ENCODE measurements at regions of chr19 and their contacts with region 1.

Region 1: DNA sequence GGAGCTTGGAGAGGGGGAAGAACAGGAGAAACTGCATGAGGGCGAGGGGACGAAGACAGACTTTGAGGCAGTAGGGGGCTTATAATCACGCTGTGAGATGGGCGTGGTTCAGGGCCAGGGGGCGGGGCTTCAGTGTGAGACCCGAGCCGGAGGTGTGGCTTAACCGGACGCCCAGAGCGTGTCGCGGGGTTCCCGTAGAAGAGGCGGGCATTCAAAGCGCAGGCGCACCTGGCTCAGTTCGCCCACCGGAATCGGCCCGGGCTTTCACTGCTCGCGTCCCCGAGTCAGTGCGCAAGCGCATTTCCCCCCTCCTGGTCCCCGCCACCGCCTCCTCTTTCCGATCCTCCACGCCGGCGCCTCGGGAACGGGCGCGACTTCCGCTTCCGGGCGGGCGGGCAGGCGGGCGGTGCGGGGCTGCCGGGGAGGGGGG is 225 bp upstream of the ZNF865 start:
- DNase-seq: peak; percentile 93 to 99 (median 98)
- ATAC-seq: peak; percentile 78
- H3K4me3 ChIP-seq: peak overlapping the region; percentile 64
- H3K4me3 Mint-ChIP-seq: peak overlapping the region; percentile 86
- H3K27ac ChIP-seq: peak overlapping the region; percentile 85 to 92
- H3K27ac Mint-ChIP-seq: peak overlapping the region; percentile 84
- H3K4me1 ChIP-seq: peaks cover 45% of the 10 kb centered on the region
- H3K4me1 Mint-ChIP-seq: peaks cover 54% of the 10 kb centered on the region
- H3K27me3 ChIP-seq: no peaks in the 10 kb centered on the region
- H3K27me3 Mint-ChIP-seq: no peaks in the 10 kb centered on the region
- CTCF ChIP-seq: no peak

Region 2: DNA sequence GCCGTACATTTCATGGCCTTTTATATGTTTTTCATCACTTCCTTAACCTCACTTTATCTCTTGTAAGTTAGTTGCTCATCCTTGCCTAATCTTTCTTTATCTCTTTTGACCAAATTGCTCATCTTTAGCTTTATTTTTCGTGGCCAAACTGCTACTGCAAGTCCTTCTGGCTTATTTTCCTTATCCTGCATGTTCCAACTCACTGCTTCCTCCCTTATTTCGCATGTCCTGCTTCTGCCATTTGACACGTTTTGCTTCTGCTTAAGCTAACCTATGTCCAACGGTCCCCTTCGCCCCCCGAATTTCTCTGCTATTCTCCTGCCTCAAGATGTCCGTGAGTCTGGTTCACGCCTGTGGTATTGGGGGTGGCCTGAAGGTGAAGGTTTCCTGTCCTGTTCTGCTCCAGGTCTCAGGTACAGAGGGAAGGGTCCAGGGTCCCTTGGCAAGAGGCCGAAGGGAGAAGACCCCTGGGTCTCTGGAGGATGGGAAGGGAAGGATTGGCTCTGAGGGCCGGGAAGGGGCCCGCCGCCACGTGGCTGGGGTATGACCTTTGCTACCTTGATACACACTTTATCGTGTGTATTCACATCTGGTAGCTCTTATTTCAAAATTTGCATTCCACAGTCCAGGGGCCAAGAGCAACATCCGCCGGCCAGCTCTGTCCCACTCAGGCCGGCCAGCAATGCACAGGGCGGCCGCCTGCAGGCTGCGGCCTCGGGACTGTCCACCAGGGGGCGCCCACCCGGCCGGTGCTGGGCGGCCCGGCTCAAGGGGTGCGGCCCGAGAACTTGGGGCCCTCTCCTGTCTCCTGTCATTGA is 137.8 kb before region 1 on chr19:
- CTCF ChIA-PET with region 1: no interaction called
- POLR2A ChIA-PET with region 1: no interaction called
- intact Hi-C with region 1: loop called in 1 of 2 experiments (anchors 5 kb)
- DNase-seq: peak; percentile 30 to 82 (median 58)
- ATAC-seq: peak; percentile 93
- H3K4me3 ChIP-seq: no peak overlapping the region
- H3K4me3 Mint-ChIP-seq: no peak overlapping the region
- H3K27ac ChIP-seq: no peak overlapping the region
- H3K27ac Mint-ChIP-seq: no peak overlapping the region
- H3K4me1 ChIP-seq: peaks cover 11% of the 10 kb centered on the region
- H3K4me1 Mint-ChIP-seq: no peaks in the 10 kb centered on the region
- H3K27me3 ChIP-seq: no peaks in the 10 kb centered on the region
- H3K27me3 Mint-ChIP-seq: no peaks in the 10 kb centered on the region
- CTCF ChIP-seq: peak; percentile 97

Region 3: GRCh38 chr19:55586976-55587668 is 18.1 kb before region 1 on chr19:
- CTCF ChIA-PET with region 1: interaction called, 12 read pairs
- POLR2A ChIA-PET with region 1: interaction called, 23 read pairs
- intact Hi-C with region 1: loop called in 1 of 2 experiments (anchors 2 kb)
- DNase-seq: peak; percentile 85 to 96 (median 91)
- ATAC-seq: peak; percentile 95
- H3K4me3 ChIP-seq: peak overlapping the region; percentile 46
- H3K4me3 Mint-ChIP-seq: peak overlapping the region; percentile 90
- H3K27ac ChIP-seq: no peak overlapping the region
- H3K27ac Mint-ChIP-seq: peak overlapping the region; percentile 71
- H3K4me1 ChIP-seq: peaks cover 29% of the 10 kb centered on the region
- H3K4me1 Mint-ChIP-seq: peaks cover 41% of the 10 kb centered on the region
- H3K27me3 ChIP-seq: no peaks in the 10 kb centered on the region
- H3K27me3 Mint-ChIP-seq: no peaks in the 10 kb centered on the region
- CTCF ChIP-seq: no peak

Region 4: GRCh38 chr19:55643348-55644176 is 38.3 kb after region 1 on chr19 and contains the start of gene ZNF581:
- CTCF ChIA-PET with region 1: interaction called, 10 read pairs
- POLR2A ChIA-PET with region 1: interaction called, 14 read pairs
- intact Hi-C with region 1: no loop called
- DNase-seq: peak; percentile 63 to 92 (median 74)
- ATAC-seq: peak; percentile 54
- H3K4me3 ChIP-seq: peak within 1 kb of the TSS; percentile 78
- H3K4me3 Mint-ChIP-seq: peak within 1 kb of the TSS; percentile 89
- H3K27ac ChIP-seq: peak within 1 kb of the TSS; percentile 71 to 78
- H3K27ac Mint-ChIP-seq: peak within 1 kb of the TSS; percentile 88
- H3K4me1 ChIP-seq: peaks cover 77% of the 10 kb centered on the region
- H3K4me1 Mint-ChIP-seq: peaks cover 54% of the 10 kb centered on the region
- H3K27me3 ChIP-seq: no peaks in the 10 kb centered on the region
- H3K27me3 Mint-ChIP-seq: no peaks in the 10 kb centered on the region
- CTCF ChIP-seq: no peak
- total RNA-seq, gene ZNF581: 23.1 to 24.7 TPM

Measured in CD4-positive, alpha-beta T cell (primary cell).